ENCODE measurements at regions of chr7 and their contacts with region 1.

Region 1: DNA sequence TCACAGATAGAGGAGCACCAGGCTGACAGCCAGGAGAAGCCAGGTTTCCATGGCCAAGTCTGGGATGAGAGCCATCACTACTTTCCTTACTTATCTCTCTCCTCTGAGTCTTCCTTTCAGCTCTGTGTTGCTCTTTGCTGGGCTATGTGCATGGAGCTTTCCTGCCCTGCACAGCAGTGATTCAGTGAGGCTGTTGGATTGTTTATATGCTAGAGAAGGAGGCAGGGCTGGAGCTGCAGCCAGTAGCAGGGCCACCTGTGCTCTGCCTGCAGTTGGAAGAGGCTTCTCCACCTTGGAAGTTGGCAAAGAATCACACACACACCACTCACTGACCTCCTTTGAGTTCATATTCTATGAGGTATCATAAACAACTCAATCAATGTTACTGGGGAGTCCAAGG is at the start of gene CYP3A4:
- DNase-seq: no peak
- ATAC-seq: no peak
- H3K4me3 ChIP-seq: no peak within 1 kb of the TSS
- H3K27ac ChIP-seq: no peak within 1 kb of the TSS
- H3K4me1 ChIP-seq: no peaks in the 10 kb centered on the region
- CTCF ChIP-seq: no peak
- EP300 ChIP-seq: no peak
- POLR2A ChIP-seq: no peak
- RAD21 ChIP-seq: no peak
- polyA plus RNA-seq, gene CYP3A4: not detected in 2 replicates

Region 2: GRCh38 chr7:99794585-99795502 is 10.8 kb after region 1 on chr7:
- CTCF ChIA-PET with region 1: interaction called, 10 read pairs
- POLR2A ChIA-PET with region 1: no interaction called
- DNase-seq: peak; percentile 20 to 58
- ATAC-seq: peak; percentile 76
- H3K4me3 ChIP-seq: no peak overlapping the region
- H3K27ac ChIP-seq: peak overlapping the region; percentile 72 to 75
- H3K4me1 ChIP-seq: peaks cover 32% of the 10 kb centered on the region
- CTCF ChIP-seq: no peak
- EP300 ChIP-seq: 0 out of 5 replicates have a peak, but pooled peaks of 1 of the 2 experiments have one; percentile 29
- POLR2A ChIP-seq: no peak
- RAD21 ChIP-seq: no peak

Region 3: GRCh38 chr7:99806839-99807478 is 23.0 kb after region 1 on chr7:
- CTCF ChIA-PET with region 1: no interaction called
- POLR2A ChIA-PET with region 1: no interaction called
- DNase-seq: no peak
- ATAC-seq: no peak
- H3K4me3 ChIP-seq: no peak overlapping the region
- H3K27ac ChIP-seq: no peak overlapping the region
- H3K4me1 ChIP-seq: no peaks in the 10 kb centered on the region
- CTCF ChIP-seq: no peak
- EP300 ChIP-seq: no peak
- POLR2A ChIP-seq: no peak
- RAD21 ChIP-seq: no peak

Measured in A549 (cell line).